Activated B cell treated with CpG ODN at 0.5 μM for 24 hours (primary cell): ENCODE measurements at regions of chr5 and their contacts with region 1.

Region 1: GRCh38 chr5:17316970-17317459 is 99.6 kb downstream of the BASP1 start:
- DNase-seq: no peak
- ATAC-seq: peak; percentile 68
- H3K4me3 Mint-ChIP-seq: peak overlapping the region; percentile 82
- H3K27ac Mint-ChIP-seq: peak overlapping the region; percentile 92
- H3K4me1 Mint-ChIP-seq: peaks cover 62% of the 10 kb centered on the region
- H3K27me3 Mint-ChIP-seq: no peaks in the 10 kb centered on the region
- CTCF ChIP-seq: no peak

Region 2: GRCh38 chr5:17228821-17229291 is 88.2 kb before region 1 on chr5:
- CTCF ChIA-PET with region 1: no interaction called
- POLR2A ChIA-PET with region 1: interaction called, 14 read pairs
- intact Hi-C with region 1: no loop called
- DNase-seq: no peak
- ATAC-seq: peak; percentile 13
- H3K4me3 Mint-ChIP-seq: peak overlapping the region; percentile 63
- H3K27ac Mint-ChIP-seq: peak overlapping the region; percentile 92
- H3K4me1 Mint-ChIP-seq: peaks cover 92% of the 10 kb centered on the region
- H3K27me3 Mint-ChIP-seq: no peaks in the 10 kb centered on the region
- CTCF ChIP-seq: no peak

Region 3: GRCh38 chr5:17269201-17269600 is 47.8 kb before region 1 on chr5:
- CTCF ChIA-PET with region 1: no interaction called
- POLR2A ChIA-PET with region 1: interaction called, 6 read pairs
- intact Hi-C with region 1: loop called (anchors 1 kb)
- DNase-seq: no peak
- ATAC-seq: peak; percentile 73
- H3K4me3 Mint-ChIP-seq: peak overlapping the region; percentile 66
- H3K27ac Mint-ChIP-seq: peak overlapping the region; percentile 87
- H3K4me1 Mint-ChIP-seq: peaks cover 96% of the 10 kb centered on the region
- H3K27me3 Mint-ChIP-seq: no peaks in the 10 kb centered on the region
- CTCF ChIP-seq: no peak

Region 4: DNA sequence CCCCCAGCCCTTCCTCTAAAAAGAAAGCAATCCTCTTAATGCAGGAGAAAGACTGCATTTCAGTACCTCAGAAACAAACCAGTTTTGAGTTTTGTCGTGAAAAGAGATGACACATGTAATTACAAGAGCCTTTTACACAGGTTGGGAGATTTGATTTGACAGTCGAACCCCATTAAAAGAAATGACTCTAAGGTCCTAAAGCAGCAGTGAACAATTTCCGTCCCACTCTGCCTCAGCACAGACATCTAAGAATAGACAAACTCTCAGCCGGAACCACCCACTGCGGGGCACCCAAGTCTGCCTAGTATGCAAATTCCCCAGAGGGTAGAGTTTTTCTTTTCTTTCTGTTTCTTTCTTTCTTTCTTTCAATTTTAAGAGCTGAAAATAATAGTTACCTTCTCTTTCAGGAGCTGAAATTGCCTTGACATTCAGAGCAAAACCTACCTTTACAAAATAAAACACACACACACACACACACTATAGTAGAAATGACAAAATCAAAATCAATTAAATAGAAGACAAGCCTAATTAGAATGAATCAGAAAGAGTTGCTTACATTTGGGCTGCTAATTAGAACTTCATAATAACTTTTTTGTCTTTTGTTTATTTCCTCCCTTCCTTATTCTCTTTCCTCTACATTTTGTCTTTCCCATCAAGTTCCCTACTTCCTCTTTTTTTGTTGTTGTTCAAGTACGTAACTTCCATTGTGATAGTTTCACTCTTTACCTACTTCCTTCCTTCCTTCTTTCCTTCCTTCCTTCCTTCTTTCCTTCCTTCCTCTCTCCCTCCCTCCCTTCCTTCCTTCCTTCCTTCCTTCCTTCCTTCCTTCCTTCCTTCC is 34.5 kb before region 1 on chr5:
- CTCF ChIA-PET with region 1: no interaction called
- POLR2A ChIA-PET with region 1: interaction called, 116 read pairs
- intact Hi-C with region 1: loop called (anchors 1 kb)
- DNase-seq: peak; percentile 52
- ATAC-seq: peak; percentile 76
- H3K4me3 Mint-ChIP-seq: peak overlapping the region; percentile 81
- H3K27ac Mint-ChIP-seq: peak overlapping the region; percentile 95
- H3K4me1 Mint-ChIP-seq: peaks cover 71% of the 10 kb centered on the region
- H3K27me3 Mint-ChIP-seq: no peaks in the 10 kb centered on the region
- CTCF ChIP-seq: no peak

Region 5: GRCh38 chr5:17343675-17344074 is 26.7 kb after region 1 on chr5:
- CTCF ChIA-PET with region 1: no interaction called
- POLR2A ChIA-PET with region 1: no interaction called
- intact Hi-C with region 1: loop called (anchors 2 kb)
- DNase-seq: no peak
- ATAC-seq: peak; percentile 91
- H3K4me3 Mint-ChIP-seq: no peak overlapping the region
- H3K27ac Mint-ChIP-seq: peak overlapping the region; percentile 27
- H3K4me1 Mint-ChIP-seq: peaks cover 12% of the 10 kb centered on the region
- H3K27me3 Mint-ChIP-seq: no peaks in the 10 kb centered on the region
- CTCF ChIP-seq: no peak

Region 6: DNA sequence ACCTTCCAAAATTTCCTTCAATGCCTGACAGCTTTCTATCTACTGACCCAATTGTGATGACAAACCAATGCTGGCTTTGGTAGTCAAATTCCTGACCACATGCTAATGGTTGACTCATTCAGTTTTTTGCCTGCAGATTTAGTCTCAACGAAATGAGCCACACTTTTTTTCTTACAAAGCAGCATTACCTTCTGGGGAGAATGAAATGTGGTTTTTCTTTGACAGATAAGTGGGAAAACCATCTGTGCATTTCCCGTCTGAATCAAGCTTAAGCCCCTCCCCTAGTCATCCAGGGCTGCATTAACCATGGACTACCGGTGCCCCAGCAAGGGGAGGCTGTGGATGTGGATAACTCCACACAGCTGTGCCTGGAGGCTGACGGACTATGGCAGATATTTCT is 81.4 kb after region 1 on chr5:
- CTCF ChIA-PET with region 1: no interaction called
- POLR2A ChIA-PET with region 1: interaction called, 12 read pairs
- intact Hi-C with region 1: loop called (anchors 1 kb)
- DNase-seq: no peak
- ATAC-seq: peak; percentile 64
- H3K4me3 Mint-ChIP-seq: peak overlapping the region; percentile 44
- H3K27ac Mint-ChIP-seq: peak overlapping the region; percentile 60
- H3K4me1 Mint-ChIP-seq: peaks cover 45% of the 10 kb centered on the region
- H3K27me3 Mint-ChIP-seq: no peaks in the 10 kb centered on the region
- CTCF ChIP-seq: no peak